ENCODE measurements at regions of chr7 and their contacts with region 1.

Region 1: GRCh38 chr7:101688183-101688831 is 59.2 kb upstream of the MYL10 start:
- DNase-seq: peak; percentile 81
- H3K4me3 ChIP-seq: peak overlapping the region; percentile 17
- H3K27ac ChIP-seq: no peak overlapping the region
- H3K4me1 ChIP-seq: no peaks in the 10 kb centered on the region
- H3K27me3 ChIP-seq: no peaks in the 10 kb centered on the region
- CTCF ChIP-seq: peak; percentile 96

Region 2: GRCh38 chr7:101772513-101773211 is 84.4 kb after region 1 on chr7:
- CTCF ChIA-PET with region 1: no interaction called
- POLR2A ChIA-PET with region 1: no interaction called
- intact Hi-C with region 1: no loop called
- DNase-seq: peak; percentile 60
- H3K4me3 ChIP-seq: no peak overlapping the region
- H3K27ac ChIP-seq: no peak overlapping the region
- H3K4me1 ChIP-seq: no peaks in the 10 kb centered on the region
- H3K27me3 ChIP-seq: no peaks in the 10 kb centered on the region
- CTCF ChIP-seq: no peak

Region 3: DNA sequence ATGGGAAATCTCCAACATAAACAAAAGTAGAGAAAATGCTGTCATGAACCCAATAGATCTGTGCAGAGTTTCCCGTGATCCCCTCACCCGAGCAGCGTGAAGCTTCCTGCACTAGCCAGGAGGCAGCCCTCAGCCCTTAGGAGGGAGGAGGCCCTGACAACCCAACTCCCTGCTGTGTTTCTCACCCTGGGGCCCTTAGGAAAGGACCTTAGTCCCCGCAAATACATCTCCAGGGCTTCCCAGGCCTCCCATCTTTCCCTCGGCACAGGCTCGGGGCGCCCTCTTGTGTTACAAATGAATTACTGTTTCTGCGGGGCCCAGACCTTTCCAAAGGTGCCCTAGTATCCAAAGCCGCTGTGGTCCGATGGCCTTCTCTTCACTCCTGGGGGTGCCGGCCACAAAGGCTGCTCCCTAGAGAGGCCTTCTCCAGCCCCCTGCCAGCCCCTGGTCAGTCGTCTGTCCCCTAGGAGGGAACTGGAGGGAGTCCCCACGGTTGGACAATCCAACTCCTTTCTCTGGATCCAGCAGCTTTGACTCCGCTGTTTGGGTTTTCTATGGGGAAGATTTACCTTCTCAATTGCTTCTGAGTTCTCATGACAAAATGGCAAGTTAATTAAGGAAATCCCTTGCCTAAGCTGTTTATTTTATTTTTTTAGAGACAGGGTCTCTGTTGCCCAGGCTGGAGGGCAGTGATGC is 548.4 kb after region 1 on chr7:
- CTCF ChIA-PET with region 1: no interaction called
- POLR2A ChIA-PET with region 1: no interaction called
- intact Hi-C with region 1: loop called (anchors 1 kb)
- DNase-seq: peak; percentile 77
- H3K4me3 ChIP-seq: no peak overlapping the region
- H3K27ac ChIP-seq: no peak overlapping the region
- H3K4me1 ChIP-seq: no peaks in the 10 kb centered on the region
- H3K27me3 ChIP-seq: no peaks in the 10 kb centered on the region
- CTCF ChIP-seq: peak; percentile 91

Region 4: DNA sequence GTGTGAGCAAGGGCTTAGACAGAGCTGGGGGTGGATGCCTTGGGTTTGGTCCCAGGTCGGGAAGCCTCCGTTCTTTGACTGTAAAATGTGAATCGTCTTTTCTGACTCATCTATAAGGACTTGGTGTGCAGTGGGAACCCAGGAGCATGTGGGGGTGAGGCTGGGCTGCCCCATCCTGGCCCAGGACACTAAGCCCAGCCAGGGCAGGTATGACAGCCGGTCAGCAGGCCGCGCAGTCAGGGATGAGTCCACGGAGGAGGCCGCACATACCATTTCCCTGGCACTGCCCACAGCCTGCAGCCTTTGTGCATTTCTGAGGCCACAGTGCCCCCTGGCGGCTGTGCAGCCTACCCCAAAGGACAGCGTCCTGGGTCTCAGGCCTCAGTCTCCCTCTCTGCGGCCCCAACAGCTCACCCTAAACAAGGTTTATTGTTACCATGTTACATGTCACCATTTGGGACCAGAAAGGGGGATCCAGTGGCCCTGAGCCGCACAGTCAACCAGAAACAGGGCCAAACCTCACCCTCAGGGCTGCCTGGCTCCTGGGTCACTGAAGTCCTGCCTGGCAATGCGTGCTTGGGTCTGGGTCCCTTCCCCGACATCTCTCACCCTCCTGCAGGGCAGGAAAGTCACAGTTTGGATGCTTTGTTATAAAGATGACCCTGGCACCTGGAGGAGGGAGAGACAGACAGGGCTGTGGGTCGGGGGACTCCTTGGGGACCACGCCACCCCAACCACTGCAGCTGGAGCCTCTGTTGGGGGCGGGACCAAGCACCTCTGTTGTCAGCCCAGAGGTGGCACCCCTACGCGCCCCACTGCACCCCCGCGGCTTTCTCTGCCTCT is 584.0 kb after region 1 on chr7:
- CTCF ChIA-PET with region 1: no interaction called
- POLR2A ChIA-PET with region 1: no interaction called
- intact Hi-C with region 1: loop called (anchors 2 kb)
- DNase-seq: peak; percentile 73
- H3K4me3 ChIP-seq: no peak overlapping the region
- H3K27ac ChIP-seq: no peak overlapping the region
- H3K4me1 ChIP-seq: no peaks in the 10 kb centered on the region
- H3K27me3 ChIP-seq: no peaks in the 10 kb centered on the region
- CTCF ChIP-seq: peak; percentile 96